CD8-positive, alpha-beta memory T cell (primary cell): ENCODE measurements at regions of chr9 and their contacts with region 1.

Region 1: GRCh38 chr9:137034863-137035761 is 3.2 kb upstream of the FUT7 start:
- DNase-seq: peak; percentile 81 to 92 (median 83)
- H3K4me3 ChIP-seq: peak overlapping the region; percentile 58
- H3K4me3 Mint-ChIP-seq: peak overlapping the region; percentile 72 to 89 (median 76)
- H3K27ac ChIP-seq: peak overlapping the region; percentile 38
- H3K27ac Mint-ChIP-seq: peak overlapping the region; percentile 75 to 96 (median 89)
- H3K4me1 ChIP-seq: peaks cover 40% of the 10 kb centered on the region
- H3K4me1 Mint-ChIP-seq: peaks cover 35 to 46% (median 36%) of the 10 kb centered on the region in 3 donors
- H3K27me3 ChIP-seq: no peaks in the 10 kb centered on the region
- H3K27me3 Mint-ChIP-seq: no peaks in the 10 kb centered on the region

Region 2: DNA sequence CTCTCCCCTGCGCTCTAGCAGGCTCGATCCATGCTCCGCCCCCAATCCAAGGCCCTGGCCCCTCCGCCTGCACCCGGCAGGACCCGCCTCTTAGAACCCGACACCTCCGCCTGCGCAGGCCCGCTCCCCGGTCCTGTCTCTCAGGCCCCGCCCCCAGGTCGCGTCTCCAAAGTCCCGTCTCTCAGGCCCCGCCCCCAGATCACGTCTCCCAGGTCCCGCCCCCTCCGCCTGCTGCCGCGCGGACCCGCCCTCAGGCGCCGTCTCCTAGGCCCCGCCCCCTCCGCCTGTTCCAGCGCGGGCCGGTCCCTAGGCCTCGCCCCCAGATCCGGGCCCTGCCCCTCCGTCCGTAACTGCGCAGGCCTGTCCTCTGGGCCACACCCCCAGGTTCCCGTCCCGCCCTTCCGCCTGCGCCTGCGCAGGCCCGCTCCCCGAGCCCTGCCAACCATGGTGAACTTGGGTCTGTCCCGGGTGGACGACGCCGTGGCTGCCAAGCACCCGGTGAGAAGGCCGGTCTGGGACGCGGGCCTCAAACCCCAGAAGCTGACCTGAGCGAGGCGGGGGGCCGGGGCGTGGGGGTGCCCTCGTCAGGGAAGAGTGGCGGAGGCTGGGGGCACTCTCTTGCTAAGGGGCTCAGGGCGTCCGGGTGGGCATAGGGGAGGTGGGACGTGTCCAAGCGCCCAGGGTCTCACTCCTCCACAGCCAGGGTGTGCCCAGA is 244.0 kb before region 1 on chr9 and contains the start of gene TMEM141:
- CTCF ChIA-PET with region 1: interaction called, 51 read pairs
- POLR2A ChIA-PET with region 1: interaction called, 3 read pairs
- DNase-seq: peak; percentile 99 to 100 (median 100)
- H3K4me3 ChIP-seq: peak within 1 kb of the TSS; percentile 79
- H3K4me3 Mint-ChIP-seq: peak within 1 kb of the TSS; percentile 77 to 93 (median 85)
- H3K27ac ChIP-seq: peak within 1 kb of the TSS; percentile 93
- H3K27ac Mint-ChIP-seq: peak within 1 kb of the TSS; percentile 89 to 96 (median 94)
- H3K4me1 ChIP-seq: peaks cover 18% of the 10 kb centered on the region
- H3K4me1 Mint-ChIP-seq: peaks cover 18 to 29% (median 25%) of the 10 kb centered on the region in 3 donors
- H3K27me3 ChIP-seq: no peaks in the 10 kb centered on the region
- H3K27me3 Mint-ChIP-seq: peaks cover 3% of the 10 kb centered on the region in 2 donors
- total RNA-seq, gene TMEM141: 50.1 to 50.6 TPM

Region 3: DNA sequence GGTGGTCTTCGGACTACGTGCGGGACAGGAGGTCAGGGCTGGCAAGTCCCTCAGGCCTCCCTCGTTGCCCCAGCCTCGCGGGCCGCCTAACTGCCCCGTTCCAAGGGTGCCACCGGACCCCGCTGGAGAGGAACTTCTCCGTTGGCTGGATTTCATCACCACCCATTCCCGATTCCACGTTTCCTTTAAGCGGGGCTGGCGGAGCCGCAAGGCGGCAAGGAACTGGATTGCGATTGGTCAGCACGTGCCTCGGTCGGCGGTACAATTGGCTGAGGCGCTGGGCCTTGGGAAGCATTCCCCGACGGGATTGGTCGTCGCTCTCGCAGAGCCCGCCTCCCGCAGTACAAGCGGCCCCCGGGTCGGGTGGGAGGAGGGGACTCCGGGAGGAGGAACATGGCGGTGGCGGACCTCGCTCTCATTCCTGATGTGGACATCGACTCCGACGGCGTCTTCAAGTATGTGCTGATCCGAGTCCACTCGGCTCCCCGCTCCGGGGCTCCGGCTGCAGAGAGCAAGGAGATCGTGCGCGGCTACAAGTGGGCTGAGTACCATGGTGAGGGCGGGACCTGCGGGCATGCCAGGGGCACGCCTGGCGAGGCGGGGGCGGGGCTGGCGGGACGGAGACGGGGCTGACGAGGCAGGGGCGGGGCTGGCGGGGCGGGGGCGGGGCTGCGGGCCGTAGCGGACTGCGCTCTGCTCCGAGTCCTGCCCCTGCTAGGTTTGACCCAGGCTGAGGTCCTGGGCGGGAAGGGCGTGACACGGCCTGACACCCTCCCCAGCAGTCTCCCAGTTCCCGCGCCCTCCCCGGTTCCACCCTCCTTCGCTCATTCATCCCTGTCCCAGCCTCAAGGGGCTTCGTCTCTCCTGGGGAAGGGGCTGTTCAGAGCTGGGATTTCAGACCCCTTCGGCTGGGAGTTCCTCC is 185.8 kb before region 1 on chr9 and contains the start of gene PHPT1:
- CTCF ChIA-PET with region 1: interaction called, 45 read pairs
- POLR2A ChIA-PET with region 1: no interaction called
- DNase-seq: peak; percentile 94 to 98 (median 96)
- H3K4me3 ChIP-seq: peak within 1 kb of the TSS; percentile 88
- H3K4me3 Mint-ChIP-seq: peak within 1 kb of the TSS; percentile 87 to 98 (median 90)
- H3K27ac ChIP-seq: peak within 1 kb of the TSS; percentile 81
- H3K27ac Mint-ChIP-seq: peak within 1 kb of the TSS; percentile 64 to 88 (median 84)
- H3K4me1 ChIP-seq: peaks cover 17% of the 10 kb centered on the region
- H3K4me1 Mint-ChIP-seq: peaks cover 0 to 27% (median 12%) of the 10 kb centered on the region in 3 donors
- H3K27me3 ChIP-seq: peaks cover 4% of the 10 kb centered on the region
- H3K27me3 Mint-ChIP-seq: peaks cover 8 to 21% of the 10 kb centered on the region in 2 donors
- total RNA-seq, gene PHPT1: 108 to 110 TPM

Region 4: GRCh38 chr9:136944519-136945279 is 90.4 kb before region 1 on chr9 and contains the starts of genes C8G and FBXW5:
- CTCF ChIA-PET with region 1: interaction called, 159 read pairs
- POLR2A ChIA-PET with region 1: interaction called, 18 read pairs
- DNase-seq: peak; percentile 92 to 96 (median 94)
- H3K4me3 ChIP-seq: peak within 1 kb of the TSS; percentile 51
- H3K4me3 Mint-ChIP-seq: peak within 1 kb of the TSS; percentile 77 to 89 (median 84)
- H3K27ac ChIP-seq: peak within 1 kb of the TSS; percentile 65
- H3K27ac Mint-ChIP-seq: peak within 1 kb of the TSS in 7 of 8 donors; percentile 26 to 96 (median 77)
- H3K4me1 ChIP-seq: peaks cover 11% of the 10 kb centered on the region
- H3K4me1 Mint-ChIP-seq: peaks cover 4 to 32% (median 9%) of the 10 kb centered on the region in 3 donors
- H3K27me3 ChIP-seq: no peaks in the 10 kb centered on the region
- H3K27me3 Mint-ChIP-seq: no peaks in the 10 kb centered on the region
- total RNA-seq, gene C8G: 0.96 TPM in 1 of 2 experiments, not detected in the other
- total RNA-seq, gene FBXW5: 104 to 105 TPM

Region 5: GRCh38 chr9:136978073-136978864 is 56.8 kb before region 1 on chr9:
- CTCF ChIA-PET with region 1: interaction called, 17 read pairs
- POLR2A ChIA-PET with region 1: interaction called, 5 read pairs
- DNase-seq: peak; percentile 68 to 85 (median 79)
- H3K4me3 ChIP-seq: no peak overlapping the region
- H3K4me3 Mint-ChIP-seq: peak overlapping the region in 4 of 7 donors; percentile 52 to 66 (median 61)
- H3K27ac ChIP-seq: no peak overlapping the region
- H3K27ac Mint-ChIP-seq: no peak overlapping the region
- H3K4me1 ChIP-seq: peaks cover 26% of the 10 kb centered on the region
- H3K4me1 Mint-ChIP-seq: peaks cover 21 to 47% (median 24%) of the 10 kb centered on the region in 3 donors
- H3K27me3 ChIP-seq: no peaks in the 10 kb centered on the region
- H3K27me3 Mint-ChIP-seq: peaks cover 0 to 5% of the 10 kb centered on the region in 2 donors

Region 6: DNA sequence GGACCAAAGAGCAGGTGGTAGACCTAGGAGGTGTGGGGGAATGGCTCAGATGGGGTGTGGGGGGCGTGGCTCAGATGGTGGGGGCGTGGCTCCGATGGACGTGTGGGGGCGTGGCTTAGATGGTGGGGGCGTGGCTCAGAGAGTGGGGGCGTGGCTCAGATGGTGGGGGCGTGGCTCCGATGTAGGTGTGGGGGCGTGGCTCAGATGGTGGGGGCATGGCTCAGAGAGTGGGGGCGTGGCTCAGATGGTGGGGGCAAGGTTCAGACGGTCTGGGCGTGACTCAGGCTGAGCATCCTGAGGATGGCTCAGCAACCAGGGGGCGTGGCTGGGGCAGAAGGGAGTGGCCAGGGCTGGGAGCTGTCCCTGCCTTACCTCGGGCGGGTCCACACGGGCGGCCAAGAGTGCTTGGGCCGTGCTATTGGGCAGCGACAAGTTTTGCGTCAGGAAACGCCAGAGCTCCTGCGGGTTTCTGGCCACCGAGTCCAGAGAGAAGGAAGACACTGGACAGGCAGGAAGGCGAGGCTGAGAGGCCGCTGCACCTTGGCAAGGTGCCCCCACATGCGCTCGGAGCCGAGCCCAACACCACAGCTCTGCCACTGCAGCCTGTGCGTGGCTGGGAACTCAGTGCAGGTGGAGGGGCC is 13.0 kb before region 1 on chr9:
- CTCF ChIA-PET with region 1: interaction called, 34 read pairs
- POLR2A ChIA-PET with region 1: interaction called, 3 read pairs
- DNase-seq: peak in 4 of 5 donors; percentile 65 to 82 (median 74)
- H3K4me3 ChIP-seq: no peak overlapping the region
- H3K4me3 Mint-ChIP-seq: peak overlapping the region in 1 of 7 donors; percentile 53
- H3K27ac ChIP-seq: no peak overlapping the region
- H3K27ac Mint-ChIP-seq: peak overlapping the region in 7 of 8 donors; percentile 28 to 93 (median 55)
- H3K4me1 ChIP-seq: peaks cover 10% of the 10 kb centered on the region
- H3K4me1 Mint-ChIP-seq: peaks cover 11 to 32% (median 12%) of the 10 kb centered on the region in 3 donors
- H3K27me3 ChIP-seq: no peaks in the 10 kb centered on the region
- H3K27me3 Mint-ChIP-seq: no peaks in the 10 kb centered on the region

Region 7: DNA sequence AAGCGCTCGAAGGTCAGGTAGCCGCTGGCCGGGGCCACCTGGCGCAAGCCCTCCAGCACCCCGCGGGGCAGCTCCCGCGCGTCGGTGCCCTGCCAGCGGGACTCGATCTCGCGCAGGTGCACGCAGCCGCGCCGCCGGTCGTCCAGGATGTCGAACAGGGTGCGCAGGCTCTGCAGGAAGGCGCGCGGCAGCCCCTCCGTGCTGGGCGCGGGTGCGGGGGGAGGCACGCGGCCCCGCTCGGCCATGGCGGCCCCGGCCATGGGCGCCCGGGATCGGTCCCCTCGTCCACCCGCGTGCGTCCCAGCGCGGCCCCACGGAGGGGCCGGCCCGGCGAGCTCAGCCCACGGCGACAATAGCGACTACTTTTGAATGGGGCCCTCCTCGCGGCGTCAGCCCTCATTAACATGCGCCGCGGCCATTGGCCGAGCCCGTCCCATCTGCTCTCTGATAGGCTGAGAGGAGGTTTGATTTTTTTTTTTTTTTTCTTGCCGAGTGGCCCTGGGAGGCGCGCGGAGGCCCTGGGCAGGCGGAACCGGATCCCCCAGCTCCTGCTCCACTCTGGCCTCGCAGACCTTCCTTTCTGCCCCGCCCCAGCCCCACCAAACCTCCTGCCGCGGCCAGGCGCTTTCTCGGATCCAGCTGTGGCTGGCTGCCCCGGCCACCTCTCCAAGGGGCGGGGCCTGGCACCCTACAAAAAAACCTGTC is 35.2 kb after region 1 on chr9 and contains the start of gene SAPCD2:
- CTCF ChIA-PET with region 1: interaction called, 48 read pairs
- POLR2A ChIA-PET with region 1: interaction called, 3 read pairs
- DNase-seq: peak; percentile 80 to 91 (median 85)
- H3K4me3 ChIP-seq: peak within 1 kb of the TSS; percentile 39
- H3K4me3 Mint-ChIP-seq: peak within 1 kb of the TSS; percentile 66 to 88 (median 77)
- H3K27ac ChIP-seq: peak within 1 kb of the TSS; percentile 65
- H3K27ac Mint-ChIP-seq: peak within 1 kb of the TSS in 6 of 8 donors; percentile 43 to 89 (median 75)
- H3K4me1 ChIP-seq: peaks cover 14% of the 10 kb centered on the region
- H3K4me1 Mint-ChIP-seq: peaks cover 6 to 19% (median 12%) of the 10 kb centered on the region in 3 donors
- H3K27me3 ChIP-seq: no peaks in the 10 kb centered on the region
- H3K27me3 Mint-ChIP-seq: peaks cover 3 to 4% of the 10 kb centered on the region in 2 donors
- total RNA-seq, gene SAPCD2: 11.5 to 12.7 TPM